ENCODE measurements at regions of chr11 and their contacts with region 1.

Region 1: GRCh38 chr11:118251858-118252652 is at the start of gene MPZL3:
- DNase-seq: peak; percentile 68 to 94 (median 87)
- ATAC-seq: peak; percentile 86
- H3K4me3 ChIP-seq: peak within 1 kb of the TSS; percentile 91
- H3K4me3 Mint-ChIP-seq: peak within 1 kb of the TSS; percentile 93 to 99 (median 96)
- H3K27ac ChIP-seq: peak within 1 kb of the TSS; percentile 93
- H3K27ac Mint-ChIP-seq: peak within 1 kb of the TSS; percentile 97 to 100 (median 99)
- H3K4me1 ChIP-seq: peaks cover 10 to 32% of the 10 kb centered on the region in 2 donors
- H3K4me1 Mint-ChIP-seq: peaks cover 16 to 52% (median 39%) of the 10 kb centered on the region in 7 donors
- H3K27me3 ChIP-seq: no peaks in the 10 kb centered on the region
- H3K27me3 Mint-ChIP-seq: no peaks in the 10 kb centered on the region
- total RNA-seq, gene MPZL3: 13.3 to 17.4 (median 17.0) TPM

Region 2: DNA sequence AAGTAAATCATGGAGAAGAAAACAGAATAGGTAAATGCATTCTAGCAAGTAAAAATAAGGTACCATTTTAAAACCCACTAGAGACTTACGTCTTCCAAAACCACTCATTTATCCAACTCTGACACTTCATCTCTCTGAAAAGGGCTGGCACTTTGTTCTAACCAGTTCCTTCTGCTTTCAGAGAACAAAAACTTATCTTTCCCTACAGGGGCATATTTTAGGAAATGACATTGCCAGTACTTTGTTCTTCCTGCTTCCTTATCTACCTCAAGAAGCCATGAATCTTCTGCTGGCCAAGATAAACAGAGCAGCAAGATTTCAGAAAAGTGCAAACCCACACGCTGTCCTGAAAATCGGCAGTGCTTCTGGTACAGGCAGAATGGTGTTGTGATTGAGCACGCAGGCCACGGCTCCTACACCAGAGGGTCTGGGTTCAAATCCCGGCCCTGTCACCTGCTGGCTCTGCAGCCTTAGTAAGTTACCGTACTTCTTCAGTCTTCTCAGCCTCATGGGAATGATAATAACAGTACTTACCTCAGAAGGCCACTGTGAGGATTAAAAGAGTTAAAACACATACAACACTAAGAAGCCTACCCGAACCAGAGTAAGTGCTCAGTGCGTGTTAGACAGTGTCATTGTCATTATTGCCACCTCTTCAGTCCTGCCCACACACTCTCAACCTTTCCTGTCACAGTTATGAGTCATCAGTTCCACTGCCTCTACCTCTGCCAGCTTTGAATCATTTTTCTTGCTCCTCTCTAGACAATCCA is 10.9 kb before region 1 on chr11:
- CTCF ChIA-PET with region 1: interaction called, 4 read pairs
- POLR2A ChIA-PET with region 1: interaction called, 15 read pairs
- intact Hi-C with region 1: loop called (anchors 1 kb)
- DNase-seq: peak in 4 of 9 donors; percentile 45 to 75 (median 53)
- ATAC-seq: peak; percentile 91
- H3K4me3 ChIP-seq: peak overlapping the region; percentile 8
- H3K4me3 Mint-ChIP-seq: peak overlapping the region; percentile 27 to 74 (median 54)
- H3K27ac ChIP-seq: peak overlapping the region; percentile 49
- H3K27ac Mint-ChIP-seq: peak overlapping the region; percentile 52 to 93 (median 83)
- H3K4me1 ChIP-seq: peaks cover 33 to 50% of the 10 kb centered on the region in 2 donors
- H3K4me1 Mint-ChIP-seq: peaks cover 54 to 76% (median 70%) of the 10 kb centered on the region in 7 donors
- H3K27me3 ChIP-seq: no peaks in the 10 kb centered on the region
- H3K27me3 Mint-ChIP-seq: no peaks in the 10 kb centered on the region

Region 3: DNA sequence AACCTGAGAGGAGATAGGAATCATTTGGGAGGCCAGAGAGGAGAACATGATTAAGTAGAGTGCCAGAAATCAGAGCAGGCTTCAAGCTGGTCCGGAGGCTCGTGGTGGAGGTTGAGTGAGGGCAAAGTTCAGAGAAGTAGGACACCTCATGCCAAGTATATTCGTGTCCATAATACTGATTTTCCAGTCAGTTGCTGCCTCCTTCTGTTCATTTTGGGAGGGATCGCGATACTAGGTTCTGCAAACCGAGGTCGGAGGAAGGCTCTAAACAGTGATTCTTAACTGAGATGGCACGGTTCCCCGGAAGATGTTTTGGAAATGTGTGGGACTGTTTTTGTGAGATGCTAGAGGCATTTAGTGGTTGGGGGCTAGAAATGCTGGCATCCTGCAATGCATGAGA is 38.9 kb after region 1 on chr11:
- CTCF ChIA-PET with region 1: interaction called, 6 read pairs
- POLR2A ChIA-PET with region 1: interaction called, 9 read pairs
- intact Hi-C with region 1: loop called (anchors 5 kb)
- DNase-seq: peak in 8 of 9 donors; percentile 22 to 63 (median 46)
- ATAC-seq: peak; percentile 81
- H3K4me3 ChIP-seq: no peak overlapping the region
- H3K4me3 Mint-ChIP-seq: peak overlapping the region in 2 of 10 donors; percentile 30 to 33
- H3K27ac ChIP-seq: no peak overlapping the region
- H3K27ac Mint-ChIP-seq: peak overlapping the region in 1 of 9 donors; percentile 68
- H3K4me1 ChIP-seq: peaks cover 0 to 11% of the 10 kb centered on the region in 2 donors
- H3K4me1 Mint-ChIP-seq: peaks cover 13 to 19% (median 15%) of the 10 kb centered on the region in 7 donors
- H3K27me3 ChIP-seq: no peaks in the 10 kb centered on the region
- H3K27me3 Mint-ChIP-seq: no peaks in the 10 kb centered on the region

Region 4: GRCh38 chr11:118401151-118401878 is 149.3 kb after region 1 on chr11 and contains the start of gene ATP5MG:
- CTCF ChIA-PET with region 1: no interaction called
- POLR2A ChIA-PET with region 1: interaction called, 3 read pairs
- intact Hi-C with region 1: loop called in 1 of 2 experiments (anchors 2 kb)
- DNase-seq: peak; percentile 83 to 96 (median 93)
- ATAC-seq: peak; percentile 71
- H3K4me3 ChIP-seq: peak within 1 kb of the TSS; percentile 79
- H3K4me3 Mint-ChIP-seq: peak within 1 kb of the TSS; percentile 97 to 99 (median 98)
- H3K27ac ChIP-seq: peak within 1 kb of the TSS; percentile 97
- H3K27ac Mint-ChIP-seq: peak within 1 kb of the TSS; percentile 97 to 100 (median 100)
- H3K4me1 ChIP-seq: peaks cover 37 to 58% of the 10 kb centered on the region in 2 donors
- H3K4me1 Mint-ChIP-seq: peaks cover 39 to 78% (median 71%) of the 10 kb centered on the region in 7 donors
- H3K27me3 ChIP-seq: no peaks in the 10 kb centered on the region
- H3K27me3 Mint-ChIP-seq: peaks cover 0 to 2% (median 0%) of the 10 kb centered on the region in 5 donors
- total RNA-seq, gene ATP5MG: 140 to 241 (median 154) TPM

Region 5: DNA sequence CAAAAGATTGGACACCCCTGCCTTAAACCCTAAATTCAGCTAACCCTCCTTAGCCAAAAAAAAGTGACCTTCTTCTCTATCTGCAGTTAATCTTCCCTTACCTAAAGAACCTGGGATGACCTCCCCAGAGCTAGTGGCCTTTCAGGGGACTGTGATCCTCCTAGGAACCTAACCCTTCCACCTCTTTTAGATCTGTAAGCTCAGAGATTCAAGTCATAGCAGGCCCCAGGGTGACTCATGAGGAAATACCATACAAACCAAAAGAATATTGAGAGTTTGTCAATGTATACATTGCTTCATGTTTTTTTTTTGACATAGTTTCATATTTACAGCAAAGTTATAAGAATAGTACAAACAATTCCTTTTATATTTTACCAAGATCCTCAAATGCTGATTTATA is 593.3 kb after region 1 on chr11:
- CTCF ChIA-PET with region 1: no interaction called
- POLR2A ChIA-PET with region 1: no interaction called
- intact Hi-C with region 1: no loop called
- DNase-seq: peak in 1 of 9 donors; percentile 26
- ATAC-seq: no peak
- H3K4me3 ChIP-seq: no peak overlapping the region
- H3K4me3 Mint-ChIP-seq: peak overlapping the region in 2 of 10 donors; percentile 18 to 33
- H3K27ac ChIP-seq: no peak overlapping the region
- H3K27ac Mint-ChIP-seq: peak overlapping the region in 6 of 9 donors; percentile 6 to 88 (median 57)
- H3K4me1 ChIP-seq: peaks cover 0 to 4% of the 10 kb centered on the region in 2 donors
- H3K4me1 Mint-ChIP-seq: peaks cover 17 to 33% (median 19%) of the 10 kb centered on the region in 7 donors
- H3K27me3 ChIP-seq: no peaks in the 10 kb centered on the region
- H3K27me3 Mint-ChIP-seq: peaks cover 0 to 2% (median 0%) of the 10 kb centered on the region in 5 donors